ENCODE measurements at regions of chr17 and their contacts with region 1.

Region 1: DNA sequence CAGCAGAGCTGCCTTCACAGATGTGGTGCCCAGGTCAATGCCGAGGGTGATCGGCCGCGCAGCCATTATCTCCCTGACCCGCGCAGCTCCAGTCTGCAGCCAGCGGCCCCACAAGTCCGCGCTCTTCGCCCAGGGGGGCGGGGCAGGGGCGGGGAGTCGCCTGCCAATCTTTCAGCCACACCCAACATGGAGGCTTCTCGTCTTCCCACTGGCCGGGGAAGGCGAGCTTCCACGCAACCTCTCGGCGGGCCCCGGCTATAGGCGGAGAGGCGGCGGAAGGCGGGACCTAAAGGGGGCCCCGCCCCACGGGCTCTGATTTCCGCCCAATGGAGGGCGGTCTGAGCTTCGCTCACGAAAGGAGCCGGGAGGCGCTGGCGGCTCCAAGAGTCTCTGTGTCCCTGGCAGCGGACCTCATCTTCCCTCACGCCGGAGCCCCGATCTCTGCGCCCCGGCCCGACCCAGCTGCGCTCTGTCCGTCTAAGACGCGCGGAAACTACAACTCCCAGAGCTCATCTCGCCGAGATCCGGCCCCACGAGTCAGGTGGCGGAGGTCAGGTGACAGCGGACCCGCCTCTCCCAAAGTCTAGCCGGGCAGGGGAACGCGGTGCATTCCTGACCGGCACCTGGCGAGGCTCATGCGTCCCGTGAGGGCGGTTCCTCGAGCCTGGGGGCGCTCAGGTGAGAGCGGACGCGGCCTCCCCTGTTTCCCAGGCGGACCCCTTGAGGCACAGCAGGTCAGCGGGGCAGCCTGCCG is at the starts of genes CTNS and SHPK:
- DNase-seq: peak; percentile 99
- H3K4me3 ChIP-seq: peak within 1 kb of the TSS; percentile 89 to 100 (median 96)
- H3K27ac ChIP-seq: peak within 1 kb of the TSS; percentile 92 to 96 (median 95)
- H3K4me1 ChIP-seq: peaks cover 0 to 32% (median 28%) of the 10 kb centered on the region in 4 donors
- H3K27me3 ChIP-seq: no peaks in the 10 kb centered on the region
- CTCF ChIP-seq: no peak
- EP300 ChIP-seq: no peak
- POLR2A ChIP-seq: peak in 1 of 2 donors; percentile 68
- total RNA-seq, gene CTNS: 13.3 to 26.0 (median 18.0) TPM
- total RNA-seq, gene SHPK: 5.8 to 8.0 (median 7.0) TPM

Region 2: GRCh38 chr17:3048767-3049471 is 587.4 kb before region 1 on chr17:
- intact Hi-C with region 1: loop called (anchors 5 kb)
- DNase-seq: peak; percentile 98
- H3K4me3 ChIP-seq: peak overlapping the region; percentile 59 to 80 (median 76)
- H3K27ac ChIP-seq: peak overlapping the region; percentile 71 to 80 (median 78)
- H3K4me1 ChIP-seq: peaks cover 0 to 12% (median 8%) of the 10 kb centered on the region in 4 donors
- H3K27me3 ChIP-seq: no peaks in the 10 kb centered on the region
- CTCF ChIP-seq: peak; percentile 31 to 60 (median 51)
- EP300 ChIP-seq: no peak
- POLR2A ChIP-seq: peak in 1 of 2 donors; percentile 20

Region 3: GRCh38 chr17:3668279-3669085 is 32.2 kb after region 1 on chr17 and contains the starts of genes EMC6 and TAX1BP3:
- intact Hi-C with region 1: loop called (anchors 1 kb)
- DNase-seq: peak; percentile 99
- H3K4me3 ChIP-seq: peak within 1 kb of the TSS; percentile 91 to 97 (median 96)
- H3K27ac ChIP-seq: peak within 1 kb of the TSS; percentile 94 to 98 (median 98)
- H3K4me1 ChIP-seq: peaks cover 0 to 43% (median 40%) of the 10 kb centered on the region in 4 donors
- H3K27me3 ChIP-seq: no peaks in the 10 kb centered on the region
- CTCF ChIP-seq: no peak
- EP300 ChIP-seq: no peak
- POLR2A ChIP-seq: peak; percentile 92 to 93
- total RNA-seq, gene EMC6: 4.4 to 21.7 (median 15.1) TPM
- total RNA-seq, gene TAX1BP3: 58.1 to 92.0 (median 63.5) TPM

Region 4: DNA sequence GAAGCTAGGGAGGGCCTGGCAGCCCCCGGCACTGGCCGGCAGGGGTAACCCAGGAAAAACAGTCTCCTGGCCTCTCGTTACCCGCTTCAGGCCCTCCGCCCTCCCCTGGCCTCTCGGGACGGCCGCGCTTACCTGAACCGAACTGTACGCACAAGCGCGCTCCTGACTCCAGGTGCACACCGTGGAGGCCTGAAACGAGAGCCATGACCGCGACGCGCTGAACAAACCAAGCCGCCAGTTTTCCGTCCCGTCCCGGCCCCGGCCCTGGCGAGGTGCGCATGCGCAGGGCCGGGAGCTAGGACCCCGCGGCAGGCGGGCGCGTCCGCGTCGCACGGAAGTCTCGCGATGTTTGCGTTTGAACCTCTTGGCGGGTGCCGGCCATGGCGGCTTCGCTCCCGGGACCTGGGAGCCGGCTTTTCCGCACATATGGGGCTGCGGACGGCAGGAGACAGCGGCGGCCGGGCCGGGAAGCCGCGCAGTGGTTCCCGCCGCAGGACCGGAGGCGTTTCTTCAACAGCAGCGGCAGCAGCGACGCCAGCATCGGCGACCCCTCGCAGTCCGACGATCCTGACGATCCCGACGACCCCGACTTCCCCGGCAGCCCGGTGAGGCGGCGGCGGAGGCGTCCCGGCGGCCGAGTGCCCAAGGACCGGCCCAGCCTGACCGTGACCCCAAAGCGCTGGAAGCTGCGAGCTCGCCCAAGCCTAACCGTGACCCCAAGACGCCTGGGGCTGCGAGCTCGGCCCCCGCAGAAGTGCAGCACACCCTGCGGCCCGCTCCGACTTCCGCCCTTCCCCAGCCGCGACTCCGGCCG is 87.4 kb after region 1 on chr17 and contains the start of gene HASPIN:
- intact Hi-C with region 1: loop called (anchors 1 kb)
- DNase-seq: peak; percentile 93
- H3K4me3 ChIP-seq: peak within 1 kb of the TSS; percentile 70 to 90 (median 76)
- H3K27ac ChIP-seq: peak within 1 kb of the TSS; percentile 87 to 90 (median 88)
- H3K4me1 ChIP-seq: peaks cover 0 to 37% (median 27%) of the 10 kb centered on the region in 4 donors
- H3K27me3 ChIP-seq: no peaks in the 10 kb centered on the region
- CTCF ChIP-seq: peak in 3 of 4 experiments; percentile 3 to 43 (median 34)
- EP300 ChIP-seq: no peak
- POLR2A ChIP-seq: peak; percentile 14 to 62
- total RNA-seq, gene HASPIN: under 0.01 to 0.83 (median 0.29) TPM